ENCODE measurements at regions of chr9 and their contacts with region 1.

Region 1: GRCh38 chr9:137578518-137579258 is at the start of gene DPH7:
- ATAC-seq: peak; percentile 87 to 96 (median 88)
- H3K4me3 ChIP-seq: peak within 1 kb of the TSS; percentile 86 to 98 (median 97)
- H3K27ac ChIP-seq: peak within 1 kb of the TSS; percentile 92 to 98
- H3K4me1 ChIP-seq: peaks cover 27 to 28% of the 10 kb centered on the region in 2 donors
- total RNA-seq, gene DPH7: 26.3 to 74.6 (median 41.1) TPM

Region 2: GRCh38 chr9:136502942-136503550 is 1075.6 kb before region 1 on chr9:
- in situ Hi-C with region 1: no loop called
- ATAC-seq: no peak
- H3K4me3 ChIP-seq: no peak overlapping the region
- H3K27ac ChIP-seq: no peak overlapping the region
- H3K4me1 ChIP-seq: no peaks in the 10 kb centered on the region

Region 3: DNA sequence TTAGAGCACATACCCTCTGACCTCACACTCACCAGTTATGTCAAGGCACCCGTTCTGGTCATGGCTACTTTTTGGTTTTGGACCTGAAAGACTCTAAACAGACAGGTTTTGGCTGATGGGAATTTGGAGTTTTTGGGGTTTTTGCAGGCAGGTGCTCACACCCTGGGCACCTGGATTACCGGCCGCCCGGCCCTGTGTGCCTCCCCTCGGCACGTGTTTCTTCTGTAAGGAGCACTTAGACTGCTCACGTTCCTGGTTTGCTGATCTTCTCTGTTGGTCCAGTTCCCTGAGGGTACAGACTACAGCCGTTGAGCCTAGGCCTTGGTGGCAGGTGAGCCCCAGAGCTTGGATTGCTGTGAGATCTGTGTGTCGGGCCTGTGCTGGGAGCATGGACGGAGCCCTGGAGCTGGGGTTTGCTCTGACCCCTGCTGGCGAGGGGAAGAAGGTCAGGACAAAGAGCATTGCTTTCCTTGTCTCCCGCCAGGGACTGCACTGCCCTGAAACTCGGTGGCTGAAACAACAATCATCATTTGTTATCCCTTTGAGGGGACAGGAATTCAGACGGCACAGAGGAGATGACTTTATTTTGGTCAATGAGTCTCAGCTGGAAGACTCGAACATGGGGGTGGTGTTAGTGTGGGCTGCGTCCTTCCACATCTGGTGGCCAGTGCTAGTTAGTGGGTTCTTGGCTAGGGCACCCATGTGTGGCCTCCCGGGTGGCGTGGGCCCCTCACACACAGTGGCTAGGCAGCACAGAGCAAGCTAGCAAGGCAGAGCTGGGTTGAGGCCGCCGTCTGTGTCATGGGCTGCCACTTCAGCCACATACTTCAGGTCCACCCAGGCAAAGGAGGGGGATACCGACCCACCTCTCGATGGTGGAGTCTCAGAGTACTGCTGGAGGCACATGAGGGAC is 116.5 kb after region 1 on chr9:
- in situ Hi-C with region 1: loop called in 1 of 9 experiments (anchors 25 kb)
- ATAC-seq: peak; percentile 74 to 98 (median 88)
- H3K4me3 ChIP-seq: no peak overlapping the region
- H3K27ac ChIP-seq: no peak overlapping the region
- H3K4me1 ChIP-seq: peaks cover 8 to 15% of the 10 kb centered on the region in 2 donors

Region 4: GRCh38 chr9:137785704-137786161 is 207.0 kb after region 1 on chr9:
- in situ Hi-C with region 1: no loop called
- ATAC-seq: peak in 7 of 8 experiments; percentile 10 to 81 (median 76)
- H3K4me3 ChIP-seq: no peak overlapping the region
- H3K27ac ChIP-seq: peak overlapping the region in 1 of 2 donors; percentile 46
- H3K4me1 ChIP-seq: peaks cover 0 to 14% of the 10 kb centered on the region in 2 donors

Region 5: DNA sequence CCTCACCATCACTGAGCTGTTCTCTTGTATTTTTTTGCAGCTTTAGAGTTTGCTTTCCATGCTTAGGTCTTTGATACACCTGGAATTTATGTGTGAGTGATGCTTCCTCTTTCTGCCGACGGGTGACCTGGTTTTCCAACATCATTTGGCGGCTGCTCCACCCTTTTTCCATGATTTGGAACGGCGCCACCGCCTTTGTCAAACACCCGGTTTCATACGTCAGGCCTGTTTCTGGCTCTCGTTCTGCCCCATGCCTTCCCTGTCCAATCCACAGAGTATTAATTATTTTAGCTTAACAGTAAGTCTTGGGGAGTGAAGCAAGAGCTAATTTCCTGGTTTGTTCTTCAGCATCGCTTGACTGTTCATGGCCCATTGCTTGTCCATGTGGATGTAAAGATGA is 329.1 kb after region 1 on chr9:
- in situ Hi-C with region 1: no loop called
- ATAC-seq: no peak
- H3K4me3 ChIP-seq: no peak overlapping the region
- H3K27ac ChIP-seq: no peak overlapping the region
- H3K4me1 ChIP-seq: peaks cover 0 to 5% of the 10 kb centered on the region in 2 donors